GM18951 (cell line): ENCODE measurements at regions of chr13 and their contacts with region 1.

Region 1: DNA sequence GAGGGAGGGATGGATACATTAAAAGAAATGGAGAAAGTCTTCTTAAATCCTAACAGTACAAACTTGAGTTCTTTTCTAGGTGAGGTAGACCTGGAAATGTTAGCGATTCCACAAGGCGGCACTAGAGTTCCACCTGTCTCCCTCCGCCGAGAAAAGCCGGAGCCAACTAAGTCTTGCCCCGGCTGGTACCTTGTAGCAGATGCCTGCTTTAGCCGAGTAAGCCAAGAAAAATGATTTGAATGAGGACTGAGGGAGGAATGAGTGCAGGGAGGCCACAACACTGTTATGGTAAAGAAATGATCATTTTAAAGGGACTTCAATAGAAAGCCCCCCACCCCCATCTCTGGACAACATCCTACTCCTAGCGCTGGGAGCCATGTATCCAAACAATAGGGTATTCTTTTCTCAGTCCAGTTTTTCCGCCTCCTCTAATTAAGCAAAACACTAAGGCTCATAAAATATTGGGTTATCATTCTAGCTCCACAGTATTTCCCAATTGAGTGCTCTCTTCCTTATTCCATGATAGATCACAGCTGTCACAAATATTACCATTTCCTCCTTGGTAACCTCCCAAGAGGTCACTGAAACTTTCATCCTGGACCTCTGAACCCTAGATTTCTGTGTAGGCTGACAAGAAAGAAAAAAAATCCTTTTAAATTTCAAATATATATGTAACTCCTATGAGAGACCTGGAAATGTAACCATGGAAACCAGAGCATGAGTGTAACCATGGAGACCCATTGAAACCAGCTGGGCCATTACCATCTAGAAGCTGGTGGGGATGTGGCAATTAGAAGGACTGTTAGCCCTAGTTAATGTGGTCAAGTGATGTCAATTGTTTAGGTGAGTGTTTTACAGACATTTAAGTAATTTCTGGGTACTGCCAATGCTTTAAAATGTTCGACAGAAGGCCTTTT is 58.3 kb downstream of the GPALPP1 start:
- POLR2A ChIP-seq: no peak

Region 2: GRCh38 chr13:44855860-44856259 is 191.8 kb before region 1 on chr13:
- in situ Hi-C with region 1: no loop called
- POLR2A ChIP-seq: no peak

Region 3: DNA sequence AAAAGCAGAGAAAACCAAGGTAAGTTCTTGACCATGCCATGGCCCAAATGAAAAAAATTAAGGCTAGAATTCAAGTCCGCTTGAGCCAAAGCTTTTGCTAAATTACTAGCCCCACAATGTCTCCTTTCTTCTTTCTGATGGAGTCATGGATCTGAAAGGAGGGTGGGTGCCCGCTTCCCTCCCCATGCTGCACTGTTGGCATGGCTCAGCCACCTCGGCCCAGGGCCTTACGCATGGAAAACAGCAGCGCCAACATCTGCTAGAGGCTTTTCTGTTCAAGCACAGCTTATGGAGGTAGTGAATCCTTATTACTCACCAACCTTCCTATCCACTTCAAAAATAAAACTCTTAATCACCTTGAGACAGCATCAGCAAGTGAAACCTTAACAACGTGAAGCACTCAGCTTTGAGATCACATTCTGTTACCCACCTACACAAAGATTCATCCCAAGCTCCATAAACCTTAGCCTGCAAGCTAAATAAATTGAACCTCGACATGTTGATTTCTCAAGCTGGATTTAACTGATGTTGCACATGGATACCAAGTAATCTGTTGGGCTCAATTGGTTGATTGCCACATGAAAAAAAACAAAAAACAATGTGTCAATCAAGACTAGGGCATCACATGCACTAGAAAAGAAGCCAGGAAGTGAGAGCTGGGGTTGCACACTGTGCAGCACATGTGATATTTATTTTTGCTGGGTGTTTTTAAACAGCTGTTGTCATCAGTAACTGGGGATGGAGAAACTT is 250.0 kb after region 1 on chr13:
- in situ Hi-C with region 1: loop called (anchors 5 kb)
- POLR2A ChIP-seq: no peak

Region 4: DNA sequence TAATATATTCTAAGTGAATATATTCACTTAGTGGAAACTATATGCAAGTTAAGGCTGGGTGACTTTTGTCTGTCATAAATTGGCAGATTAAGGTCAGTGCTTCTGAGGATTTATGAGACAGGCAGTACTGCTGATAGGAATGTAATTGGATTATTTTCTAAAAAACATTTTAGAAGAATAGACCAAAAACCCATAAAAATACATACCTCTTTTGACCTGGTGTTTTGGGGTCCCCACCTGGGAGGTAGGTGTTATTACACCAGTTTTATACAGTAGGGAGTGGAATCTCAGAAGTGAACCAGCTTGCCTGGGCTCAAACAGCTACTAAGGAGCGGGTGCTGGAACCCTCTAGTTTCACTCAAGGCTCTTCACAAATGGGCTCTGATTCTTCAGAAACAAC is 442.4 kb after region 1 on chr13:
- in situ Hi-C with region 1: loop called (anchors 25 kb)
- POLR2A ChIP-seq: no peak